Motor neuron (in vitro differentiated cells): ENCODE measurements at regions of chr11 and their contacts with region 1.

Region 1: GRCh38 chr11:126416542-126417090 is 61.1 kb downstream of the ST3GAL4 start:
- ATAC-seq: peak; percentile 42 to 98 (median 95)
- H3K4me3 ChIP-seq: peak overlapping the region; percentile 22 to 31 (median 22)
- H3K27ac ChIP-seq: no peak overlapping the region
- H3K4me1 ChIP-seq: peaks cover 6 to 8% of the 10 kb centered on the region in 2 donors

Region 2: GRCh38 chr11:126303623-126304456 is 112.8 kb before region 1 on chr11 and contains the start of gene DCPS:
- in situ Hi-C with region 1: loop called in 1 of 9 experiments (anchors 25 kb)
- ATAC-seq: peak; percentile 87 to 97 (median 96)
- H3K4me3 ChIP-seq: peak within 1 kb of the TSS; percentile 59 to 83 (median 74)
- H3K27ac ChIP-seq: peak within 1 kb of the TSS; percentile 93 to 94
- H3K4me1 ChIP-seq: peaks cover 5 to 10% of the 10 kb centered on the region in 2 donors
- total RNA-seq, gene DCPS: 6.2 to 54.8 (median 12.4) TPM